ENCODE measurements at regions of chr16 and their contacts with region 1.

Region 1: GRCh38 chr16:788394-789126 is at the start of gene CHTF18:
- DNase-seq: peak; percentile 54 to 93
- H3K4me3 ChIP-seq: peak within 1 kb of the TSS; percentile 76 to 98 (median 84)
- H3K27ac ChIP-seq: peak within 1 kb of the TSS; percentile 58; the same call in 1 of the 2 replicates
- H3K4me1 ChIP-seq: peaks cover 0 to 14% (median 6%) of the 10 kb centered on the region in 4 experiments; a peak in 4 of 7 replicates
- H3K27me3 ChIP-seq: no peaks in the 10 kb centered on the region
- CTCF ChIP-seq: no peak
- EP300 ChIP-seq: no peak
- POLR2A ChIP-seq: no peak; a peak in 1 of 3 replicates
- RAD21 ChIP-seq: no peak
- total RNA-seq, gene CHTF18: 98.3 and 104 TPM in 2 replicates

Region 2: DNA sequence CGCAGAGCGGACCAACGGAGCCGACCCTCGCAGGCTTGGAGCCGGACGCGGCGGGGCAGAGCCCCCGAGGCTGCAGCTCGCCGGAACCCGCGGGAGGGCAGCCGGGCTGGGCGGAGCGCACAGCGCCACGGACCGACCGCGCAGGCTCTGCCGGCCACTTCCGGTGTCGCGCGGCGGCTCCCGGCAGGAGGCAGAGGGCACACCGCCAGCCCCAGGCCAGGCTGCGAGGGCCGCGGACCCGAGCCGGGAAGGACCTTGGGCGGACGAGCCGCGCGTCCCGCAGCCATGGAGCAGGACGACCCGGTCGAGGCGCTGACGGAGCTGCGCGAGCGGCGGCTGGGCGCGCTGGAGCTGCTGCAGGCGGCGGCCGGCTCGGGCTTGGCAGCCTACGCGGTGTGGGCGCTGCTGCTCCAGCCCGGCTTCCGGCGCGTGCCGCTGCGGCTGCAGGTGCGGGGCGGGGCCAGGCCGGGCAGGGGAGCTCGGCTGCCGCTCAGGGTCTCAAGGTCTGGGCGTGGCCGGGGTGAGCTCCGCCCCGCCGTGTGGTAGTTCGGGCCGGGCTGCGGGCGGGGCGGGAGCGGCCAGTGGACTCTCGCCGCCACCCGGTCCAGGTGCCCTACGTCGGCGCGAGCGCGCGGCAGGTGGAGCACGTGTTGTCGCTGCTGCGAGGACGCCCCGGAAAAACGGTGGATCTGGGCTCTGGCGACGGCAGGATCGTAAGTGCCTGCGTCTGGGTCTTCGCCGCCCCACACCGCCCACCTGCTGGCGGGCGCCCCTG is 67.4 kb before region 1 on chr16 and contains the start of gene ANTKMT:
- CTCF ChIA-PET with region 1: interaction called, 424 read pairs
- POLR2A ChIA-PET with region 1: interaction called, 24 read pairs
- DNase-seq: peak in 1 of 2 experiments; percentile 93
- H3K4me3 ChIP-seq: peak within 1 kb of the TSS; percentile 75 to 77 (median 76)
- H3K27ac ChIP-seq: peak within 1 kb of the TSS; percentile 89
- H3K4me1 ChIP-seq: peaks cover 0 to 22% (median 14%) of the 10 kb centered on the region in 4 experiments; a peak in 5 of 7 replicates
- H3K27me3 ChIP-seq: peaks cover 0 to 26% (median 6%) of the 10 kb centered on the region in 4 experiments; a peak in 5 of 7 replicates
- CTCF ChIP-seq: 0 out of 4 replicates have a peak, but pooled peaks of 1 of the 3 experiments have one; percentile 10
- EP300 ChIP-seq: no peak
- POLR2A ChIP-seq: peak in 1 of 2 experiments; percentile 88; a peak in 2 of 3 replicates
- RAD21 ChIP-seq: peak in 1 of 2 experiments; percentile 2; a peak in 1 of 4 replicates
- total RNA-seq, gene ANTKMT: 26.5 and 31.8 TPM in 2 replicates

Region 3: DNA sequence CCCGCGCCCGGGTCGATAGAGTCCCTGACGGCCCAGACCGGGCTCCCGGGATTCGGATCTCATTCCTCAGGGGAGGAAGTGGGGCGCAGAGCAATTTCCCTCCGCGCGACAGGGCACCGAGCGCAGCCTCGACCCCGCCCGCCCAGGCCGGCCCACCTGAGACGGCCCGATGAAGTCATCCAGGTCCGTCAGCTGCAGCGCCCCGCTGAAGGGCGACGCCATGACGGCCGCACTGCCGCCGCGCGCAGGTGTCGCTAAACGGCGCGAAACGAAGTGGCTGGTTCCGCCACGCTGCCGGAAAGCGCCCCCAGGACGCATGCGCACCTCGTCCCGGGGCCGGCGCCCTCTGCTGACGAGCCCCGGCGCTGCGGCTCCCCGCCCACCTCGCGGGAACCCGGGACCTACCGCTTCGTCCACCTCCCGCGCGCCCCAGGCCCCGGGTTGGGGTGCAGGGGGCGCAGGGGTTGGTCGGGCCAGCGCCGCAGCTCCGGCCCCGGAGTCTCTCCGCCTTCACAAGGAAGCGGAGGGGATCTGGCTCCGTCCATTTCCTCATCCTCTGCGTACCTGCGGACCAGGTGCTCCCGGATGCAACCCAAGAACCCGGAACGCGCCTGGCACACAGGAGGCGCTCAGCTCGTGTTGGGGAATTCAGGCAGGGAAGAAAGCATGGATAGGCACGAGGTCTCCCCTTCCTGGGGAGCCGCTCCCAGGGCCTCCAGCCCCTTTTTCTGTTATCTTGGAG is 47.6 kb before region 1 on chr16 and contains the start of gene CIAO3:
- CTCF ChIA-PET with region 1: interaction called, 424 read pairs
- POLR2A ChIA-PET with region 1: interaction called, 18 read pairs
- DNase-seq: peak in 1 of 2 experiments; percentile 99
- H3K4me3 ChIP-seq: peak within 1 kb of the TSS; percentile 62 to 90 (median 81)
- H3K27ac ChIP-seq: peak within 1 kb of the TSS; percentile 84
- H3K4me1 ChIP-seq: peaks cover 0 to 9% (median 4%) of the 10 kb centered on the region in 4 experiments; a peak in 5 of 7 replicates
- H3K27me3 ChIP-seq: no peaks in the 10 kb centered on the region
- CTCF ChIP-seq: peak; percentile 72 to 91 (median 82); a peak in 3 of 4 replicates
- EP300 ChIP-seq: no peak
- POLR2A ChIP-seq: peak in 1 of 2 experiments; percentile 66; a peak in 1 of 3 replicates
- RAD21 ChIP-seq: no peak; a peak in 2 of 4 replicates
- total RNA-seq, gene CIAO3: 20.4 and 21.0 TPM in 2 replicates

Region 4: GRCh38 chr16:760545-761343 is 27.8 kb before region 1 on chr16 and contains the start of gene MSLN:
- CTCF ChIA-PET with region 1: interaction called, 22 read pairs
- POLR2A ChIA-PET with region 1: interaction called, 5 read pairs
- DNase-seq: no peak
- H3K4me3 ChIP-seq: no peak within 1 kb of the TSS
- H3K27ac ChIP-seq: no peak within 1 kb of the TSS
- H3K4me1 ChIP-seq: peaks cover 0 to 2% (median 0%) of the 10 kb centered on the region in 4 experiments; a peak in 1 of 7 replicates
- H3K27me3 ChIP-seq: no peaks in the 10 kb centered on the region
- CTCF ChIP-seq: no peak
- EP300 ChIP-seq: no peak
- POLR2A ChIP-seq: no peak
- RAD21 ChIP-seq: no peak
- total RNA-seq, gene MSLN: 0.28 TPM in 1 of 2 replicates, not detected in the other

Region 5: DNA sequence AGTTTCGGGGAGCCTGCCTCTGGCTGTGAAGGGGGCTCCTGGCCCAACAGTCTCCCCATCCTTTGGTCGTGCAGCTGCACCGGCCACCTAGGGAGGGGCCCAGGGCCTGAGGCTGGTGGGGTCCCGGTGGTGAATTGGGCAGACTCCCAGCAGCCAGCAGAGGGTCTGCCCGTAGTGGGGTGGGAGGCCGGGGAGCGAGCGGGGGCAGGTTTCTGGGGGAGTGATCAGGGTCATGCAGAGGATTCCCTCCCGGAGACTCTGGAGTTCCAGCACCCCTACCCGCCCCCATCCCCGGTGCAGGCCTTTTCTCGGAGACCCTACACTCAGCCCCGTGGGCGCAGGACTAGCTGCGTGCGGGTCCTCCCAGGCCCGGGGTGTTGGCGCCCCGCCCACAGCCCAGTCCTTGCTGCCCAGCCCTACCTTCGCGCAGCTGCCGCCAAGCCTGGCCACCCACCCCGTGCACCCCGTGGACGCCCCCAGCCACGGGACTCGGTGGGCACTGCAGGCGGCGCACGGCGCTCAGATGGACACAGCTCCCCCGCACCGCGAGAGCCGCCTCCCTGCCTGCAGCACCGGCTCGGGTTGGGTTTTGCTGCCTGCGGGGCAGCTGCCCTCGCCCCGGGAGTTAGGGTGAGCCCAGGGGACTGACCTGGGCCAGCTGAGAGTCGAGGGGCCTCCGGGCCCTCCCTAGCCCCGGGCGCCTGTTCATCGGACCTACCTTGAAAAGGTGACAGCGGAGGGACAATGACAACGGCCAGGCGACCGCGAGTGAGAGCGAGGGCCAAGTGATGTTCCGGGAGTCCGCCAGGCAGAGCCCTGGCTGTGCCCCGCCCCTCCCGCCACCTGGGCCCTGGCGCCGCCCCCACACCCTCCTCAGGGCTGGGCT is 11.6 kb after region 1 on chr16 and contains the start of gene GNG13:
- CTCF ChIA-PET with region 1: interaction called, 24 read pairs
- POLR2A ChIA-PET with region 1: interaction called, 20 read pairs
- DNase-seq: peak in 1 of 2 experiments; percentile 84
- H3K4me3 ChIP-seq: peak within 1 kb of the TSS; percentile 5 to 61 (median 20); a peak in 6 of 8 replicates
- H3K27ac ChIP-seq: no peak within 1 kb of the TSS
- H3K4me1 ChIP-seq: peaks cover 0 to 17% (median 3%) of the 10 kb centered on the region in 4 experiments; a peak in 4 of 7 replicates
- H3K27me3 ChIP-seq: peaks cover 1 to 42% (median 28%) of the 10 kb centered on the region in 4 experiments; a peak in 6 of 7 replicates
- CTCF ChIP-seq: no peak
- EP300 ChIP-seq: no peak
- POLR2A ChIP-seq: no peak
- RAD21 ChIP-seq: no peak
- total RNA-seq, gene GNG13: not detected in 2 replicates

Region 6: GRCh38 chr16:813204-813915 is 24.8 kb after region 1 on chr16:
- CTCF ChIA-PET with region 1: no interaction called
- POLR2A ChIA-PET with region 1: no interaction called
- DNase-seq: peak in 1 of 2 experiments; percentile 91
- H3K4me3 ChIP-seq: peak overlapping the region; percentile 2 to 55 (median 25); a peak in 5 of 8 replicates
- H3K27ac ChIP-seq: no peak overlapping the region
- H3K4me1 ChIP-seq: peaks cover 0 to 3% (median 2%) of the 10 kb centered on the region in 4 experiments; a peak in 6 of 7 replicates
- H3K27me3 ChIP-seq: peaks cover 0 to 6% (median 4%) of the 10 kb centered on the region in 4 experiments; a peak in 6 of 7 replicates
- CTCF ChIP-seq: peak; percentile 82 to 94 (median 91)
- EP300 ChIP-seq: no peak; a peak in 1 of 3 replicates
- POLR2A ChIP-seq: no peak
- RAD21 ChIP-seq: peak; percentile 94 to 98

Measured in H1 (cell line).